Posterior vena cava (tissue), 2 donors: ENCODE measurements at regions of chr4 and their contacts with region 1.

Region 1: DNA sequence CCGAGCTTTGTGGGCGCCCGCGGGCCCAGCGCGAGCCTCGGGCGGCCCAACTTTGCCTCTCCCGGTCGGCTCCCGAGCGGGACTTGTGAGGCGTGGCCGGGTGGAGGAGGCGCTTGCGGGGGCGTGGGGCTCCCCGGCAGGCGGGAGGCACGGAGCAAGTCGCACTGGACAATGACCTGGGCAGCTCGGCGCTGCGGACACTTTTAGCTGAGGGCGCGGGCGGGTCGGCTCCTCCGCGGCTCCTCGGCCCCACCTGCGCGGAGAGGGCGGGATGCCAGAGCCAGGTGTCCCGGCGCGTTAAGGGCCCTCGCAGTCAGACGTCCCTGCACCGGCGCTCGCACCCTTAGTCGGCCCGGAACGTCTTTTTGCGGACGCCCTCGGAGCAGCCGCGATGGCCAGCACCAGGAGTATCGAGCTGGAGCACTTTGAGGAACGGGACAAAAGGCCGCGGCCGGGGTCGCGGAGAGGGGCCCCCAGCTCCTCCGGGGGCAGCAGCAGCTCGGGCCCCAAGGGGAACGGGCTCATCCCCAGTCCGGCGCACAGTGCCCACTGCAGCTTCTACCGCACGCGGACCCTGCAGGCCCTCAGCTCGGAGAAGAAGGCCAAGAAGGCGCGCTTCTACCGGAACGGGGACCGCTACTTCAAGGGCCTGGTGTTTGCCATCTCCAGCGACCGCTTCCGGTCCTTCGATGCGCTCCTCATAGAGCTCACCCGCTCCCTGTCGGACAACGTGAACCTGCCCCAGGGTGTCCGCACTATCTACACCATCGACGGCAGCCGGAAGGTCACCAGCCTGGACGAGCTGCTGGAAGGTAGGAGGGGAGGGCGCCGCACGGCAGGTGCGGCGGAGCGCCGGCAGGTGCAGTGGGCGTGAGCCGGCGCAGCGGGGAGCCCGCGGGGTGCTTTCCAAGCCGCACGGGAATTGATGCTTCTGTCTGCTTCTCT is 664 bp downstream of the DCLK2 start:
- DNase-seq: peak; percentile 87

Region 2: DNA sequence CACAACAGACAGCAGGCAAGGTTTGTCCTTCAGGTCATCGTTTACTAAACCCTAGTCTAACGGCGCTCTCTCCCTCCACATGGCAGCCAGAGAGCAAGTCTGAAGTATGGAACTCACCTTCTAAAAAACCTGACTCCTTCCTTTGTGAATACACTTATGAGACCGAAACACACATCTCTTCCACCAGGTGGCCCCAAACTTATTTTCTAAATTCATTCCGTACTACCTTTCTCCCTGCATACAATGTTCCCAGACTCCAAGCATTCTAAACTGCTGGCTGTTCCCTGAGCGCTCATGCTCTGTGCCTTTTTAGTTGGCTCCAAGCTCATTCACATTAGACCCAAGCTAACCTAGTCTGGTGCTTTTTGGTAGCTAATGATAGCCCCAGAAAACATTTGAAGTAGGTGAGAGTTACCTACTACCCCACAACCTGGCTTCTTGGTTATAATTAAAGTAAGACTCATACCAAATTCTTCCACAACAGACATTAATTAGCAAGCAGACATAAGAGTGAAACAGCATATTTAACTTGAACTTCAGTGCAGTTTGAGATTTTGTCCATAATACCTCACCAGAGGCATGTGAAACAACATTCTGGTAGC is 68.3 kb before region 1 on chr4:
- intact Hi-C with region 1: loop called in 1 of 2 experiments (anchors 5 kb)
- DNase-seq: no peak

Region 3: GRCh38 chr4:150217192-150217591 is 138.3 kb after region 1 on chr4:
- intact Hi-C with region 1: loop called in 1 of 2 experiments (anchors 10 kb)
- DNase-seq: no peak